Activated CD8-positive, alpha-beta T cell treated with anti-CD3 and anti-CD28 coated beads, Interleukin-2, amount 10 ng/mL, durations not matched to agents 7 days and 5 days (primary cell): ENCODE measurements at regions of chr2 and their contacts with region 1.

Region 1: GRCh38 chr2:7672027-7672684 is 754.9 kb downstream of the RNF144A start:
- DNase-seq: peak; percentile 77
- ATAC-seq: peak; percentile 85
- H3K4me3 Mint-ChIP-seq: peak overlapping the region; percentile 40
- H3K27ac Mint-ChIP-seq: peak overlapping the region; percentile 87
- H3K4me1 Mint-ChIP-seq: peaks cover 53% of the 10 kb centered on the region
- H3K27me3 Mint-ChIP-seq: no peaks in the 10 kb centered on the region

Region 2: DNA sequence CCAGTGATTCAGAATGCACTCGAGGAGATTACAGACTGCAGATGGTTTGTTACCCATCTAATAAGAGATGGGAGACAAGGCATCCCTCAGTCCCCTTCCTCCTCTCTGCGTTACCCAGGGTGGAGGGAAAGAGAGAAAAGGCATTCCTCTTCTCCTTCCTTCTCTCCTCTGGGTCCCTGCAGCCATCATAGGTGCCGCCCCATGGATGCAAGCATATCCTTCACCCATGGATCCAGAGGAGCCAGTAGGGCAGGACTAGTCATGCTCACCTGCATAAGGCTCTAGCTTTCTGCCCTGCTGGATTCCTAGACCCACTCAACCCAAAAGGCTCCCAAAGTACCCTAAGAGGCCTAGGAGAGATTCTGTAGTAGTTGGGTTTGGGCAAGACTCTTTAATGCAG is 826.8 kb before region 1 on chr2:
- CTCF ChIA-PET with region 1: no interaction called
- POLR2A ChIA-PET with region 1: no interaction called
- DNase-seq: no peak
- ATAC-seq: peak; percentile 19
- H3K4me3 Mint-ChIP-seq: no peak overlapping the region
- H3K27ac Mint-ChIP-seq: no peak overlapping the region
- H3K4me1 Mint-ChIP-seq: peaks cover 34% of the 10 kb centered on the region
- H3K27me3 Mint-ChIP-seq: no peaks in the 10 kb centered on the region

Region 3: GRCh38 chr2:7515327-7515726 is 156.8 kb before region 1 on chr2:
- CTCF ChIA-PET with region 1: interaction called, 10 read pairs
- POLR2A ChIA-PET with region 1: no interaction called
- DNase-seq: no peak
- ATAC-seq: peak; percentile 13
- H3K4me3 Mint-ChIP-seq: no peak overlapping the region
- H3K27ac Mint-ChIP-seq: peak overlapping the region; percentile 63
- H3K4me1 Mint-ChIP-seq: peaks cover 58% of the 10 kb centered on the region
- H3K27me3 Mint-ChIP-seq: no peaks in the 10 kb centered on the region

Region 4: DNA sequence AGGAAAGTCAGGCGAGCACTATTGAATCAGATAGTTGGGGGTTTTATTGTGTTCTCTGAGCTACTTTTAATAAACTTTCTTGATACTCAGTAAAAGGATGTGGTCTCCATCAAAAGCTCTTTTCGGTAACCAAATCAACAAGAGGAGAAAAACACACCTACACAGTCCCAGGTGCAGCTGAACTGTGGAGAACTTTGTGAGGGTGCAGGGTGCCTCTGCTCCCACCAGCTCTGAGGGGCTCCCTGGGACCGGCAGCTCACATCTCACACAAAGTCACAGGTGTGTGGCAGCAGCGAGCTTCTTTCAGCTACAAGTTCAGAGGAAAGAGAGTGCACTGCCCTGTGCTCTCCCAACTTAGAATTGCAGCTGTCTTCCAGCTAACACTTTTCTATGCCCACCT is 104.5 kb before region 1 on chr2:
- CTCF ChIA-PET with region 1: interaction called, 24 read pairs
- POLR2A ChIA-PET with region 1: no interaction called
- DNase-seq: peak; percentile 80
- ATAC-seq: peak; percentile 94
- H3K4me3 Mint-ChIP-seq: peak overlapping the region; percentile 60
- H3K27ac Mint-ChIP-seq: peak overlapping the region; percentile 95
- H3K4me1 Mint-ChIP-seq: peaks cover 63% of the 10 kb centered on the region
- H3K27me3 Mint-ChIP-seq: no peaks in the 10 kb centered on the region

Region 5: DNA sequence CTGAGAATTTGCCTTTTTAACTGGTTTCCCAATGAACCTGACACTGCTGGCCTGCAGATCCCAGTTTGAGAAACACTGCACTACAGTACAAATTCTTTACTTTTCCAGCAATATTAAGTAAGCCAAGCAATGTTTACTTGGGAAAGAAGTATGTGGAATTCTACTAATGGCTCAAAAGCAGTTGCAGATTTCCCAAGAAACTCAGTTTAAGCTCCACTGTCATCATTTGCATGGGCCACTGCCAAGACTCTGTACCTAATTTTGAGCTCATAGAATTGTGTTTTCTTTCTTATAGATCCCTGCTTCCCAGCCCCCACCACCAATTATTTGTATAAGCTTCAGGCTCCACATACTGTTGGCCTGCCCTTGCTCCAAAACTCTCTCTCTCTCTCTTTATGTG is 78.8 kb before region 1 on chr2:
- CTCF ChIA-PET with region 1: interaction called, 13 read pairs
- POLR2A ChIA-PET with region 1: no interaction called
- DNase-seq: no peak
- ATAC-seq: no peak
- H3K4me3 Mint-ChIP-seq: no peak overlapping the region
- H3K27ac Mint-ChIP-seq: no peak overlapping the region
- H3K4me1 Mint-ChIP-seq: peaks cover 17% of the 10 kb centered on the region
- H3K27me3 Mint-ChIP-seq: no peaks in the 10 kb centered on the region

Region 6: GRCh38 chr2:7633566-7634153 is 38.5 kb before region 1 on chr2:
- CTCF ChIA-PET with region 1: interaction called, 11 read pairs
- POLR2A ChIA-PET with region 1: no interaction called
- DNase-seq: no peak
- ATAC-seq: no peak
- H3K4me3 Mint-ChIP-seq: no peak overlapping the region
- H3K27ac Mint-ChIP-seq: no peak overlapping the region
- H3K4me1 Mint-ChIP-seq: no peaks in the 10 kb centered on the region
- H3K27me3 Mint-ChIP-seq: no peaks in the 10 kb centered on the region